Activated T-helper 1 cell treated with anti-CD3 and anti-CD28 coated beads, Interleukin-12 subunit alpha, Interleukin-12 subunit beta, Interleukin-2, Interleukin-4 antibody, amounts not matched to agents 30 ng/mL and 10 ng/mL and 1 ng/mL, durations not matched to agents 14 hours and 24 hours and 36 hours (primary cell): ENCODE measurements at regions of chr4 and their contacts with region 1.

Region 1: GRCh38 chr4:40309250-40309774 is 25.8 kb upstream of the CHRNA9 start:
- DNase-seq: peak; percentile 81
- H3K4me3 Mint-ChIP-seq: peak overlapping the region; percentile 67
- H3K27ac Mint-ChIP-seq: peak overlapping the region; percentile 94
- H3K4me1 Mint-ChIP-seq: peaks cover 88% of the 10 kb centered on the region
- H3K27me3 Mint-ChIP-seq: no peaks in the 10 kb centered on the region

Region 2: GRCh38 chr4:40149960-40150385 is 159.3 kb before region 1 on chr4:
- intact Hi-C with region 1: loop called (anchors 1 kb)
- DNase-seq: peak; percentile 67
- H3K4me3 Mint-ChIP-seq: no peak overlapping the region
- H3K27ac Mint-ChIP-seq: peak overlapping the region; percentile 48
- H3K4me1 Mint-ChIP-seq: no peaks in the 10 kb centered on the region
- H3K27me3 Mint-ChIP-seq: no peaks in the 10 kb centered on the region

Region 3: DNA sequence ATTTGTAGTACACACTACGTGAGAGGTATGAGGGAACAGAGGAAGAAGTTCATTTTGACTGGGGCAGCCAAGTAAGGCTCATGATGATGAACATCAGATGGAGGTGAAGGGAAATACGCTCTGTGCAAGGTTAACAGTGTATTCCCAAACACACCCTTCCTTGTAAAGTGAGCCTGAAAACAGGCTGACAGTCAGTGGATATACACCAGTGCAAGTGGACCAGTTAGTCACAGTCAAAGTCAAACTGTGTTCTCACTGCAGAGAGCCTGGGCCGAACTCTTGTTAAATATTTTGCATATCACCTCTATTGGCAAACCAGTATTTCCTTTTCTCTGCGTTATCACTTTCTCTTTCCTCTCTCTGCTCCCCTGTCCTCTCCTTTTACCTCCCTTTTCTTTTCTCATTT is 135.8 kb before region 1 on chr4:
- intact Hi-C with region 1: no loop called
- DNase-seq: no peak
- H3K4me3 Mint-ChIP-seq: peak overlapping the region; percentile 45
- H3K27ac Mint-ChIP-seq: peak overlapping the region; percentile 37
- H3K4me1 Mint-ChIP-seq: peaks cover 21% of the 10 kb centered on the region
- H3K27me3 Mint-ChIP-seq: peaks cover 8% of the 10 kb centered on the region

Region 4: DNA sequence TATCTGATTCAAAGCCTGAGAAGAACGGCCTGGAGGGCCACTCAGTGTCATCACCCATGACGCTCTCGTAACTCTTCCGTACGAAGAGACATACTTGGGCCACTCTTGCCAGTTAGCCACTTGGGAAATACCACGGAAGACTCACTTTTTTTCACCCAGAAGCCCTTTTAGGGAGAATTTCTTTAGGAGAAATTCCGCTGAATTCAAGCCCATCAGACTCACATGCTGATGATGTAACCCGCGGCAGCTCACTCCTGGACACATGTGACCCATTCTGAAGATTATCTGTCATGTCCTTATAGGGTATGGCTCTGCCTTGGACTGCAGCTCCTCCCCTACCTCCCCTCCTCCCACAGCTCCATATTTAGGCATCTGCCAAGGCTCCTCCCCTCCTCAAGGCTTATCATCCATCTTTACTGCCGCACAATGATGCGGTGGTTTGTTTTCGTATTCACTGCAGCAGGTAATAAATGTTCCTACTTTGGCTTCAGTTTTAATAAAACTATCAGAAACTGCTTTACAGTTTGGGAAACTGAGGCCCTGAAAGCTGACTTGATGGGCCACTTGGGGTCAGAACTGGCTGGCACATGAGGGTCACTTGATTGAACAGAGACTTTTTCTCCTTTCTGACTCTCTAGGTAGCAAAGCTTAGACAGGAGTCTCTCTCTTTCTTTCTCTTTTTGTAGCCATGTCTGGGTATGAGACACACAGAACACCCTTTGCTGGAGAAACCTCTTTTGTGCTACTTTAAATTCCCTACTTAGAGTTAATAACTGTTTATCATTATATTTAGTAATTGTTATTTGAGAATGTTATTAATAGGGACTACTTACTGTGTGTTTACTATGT is 70.4 kb before region 1 on chr4:
- intact Hi-C with region 1: loop called (anchors 1 kb)
- DNase-seq: peak; percentile 72
- H3K4me3 Mint-ChIP-seq: peak overlapping the region; percentile 83
- H3K27ac Mint-ChIP-seq: peak overlapping the region; percentile 92
- H3K4me1 Mint-ChIP-seq: peaks cover 90% of the 10 kb centered on the region
- H3K27me3 Mint-ChIP-seq: no peaks in the 10 kb centered on the region

Region 5: GRCh38 chr4:40283968-40284367 is 25.3 kb before region 1 on chr4:
- intact Hi-C with region 1: loop called (anchors 1 kb)
- DNase-seq: peak; percentile 54
- H3K4me3 Mint-ChIP-seq: peak overlapping the region; percentile 32
- H3K27ac Mint-ChIP-seq: peak overlapping the region; percentile 84
- H3K4me1 Mint-ChIP-seq: peaks cover 56% of the 10 kb centered on the region
- H3K27me3 Mint-ChIP-seq: no peaks in the 10 kb centered on the region

Region 6: DNA sequence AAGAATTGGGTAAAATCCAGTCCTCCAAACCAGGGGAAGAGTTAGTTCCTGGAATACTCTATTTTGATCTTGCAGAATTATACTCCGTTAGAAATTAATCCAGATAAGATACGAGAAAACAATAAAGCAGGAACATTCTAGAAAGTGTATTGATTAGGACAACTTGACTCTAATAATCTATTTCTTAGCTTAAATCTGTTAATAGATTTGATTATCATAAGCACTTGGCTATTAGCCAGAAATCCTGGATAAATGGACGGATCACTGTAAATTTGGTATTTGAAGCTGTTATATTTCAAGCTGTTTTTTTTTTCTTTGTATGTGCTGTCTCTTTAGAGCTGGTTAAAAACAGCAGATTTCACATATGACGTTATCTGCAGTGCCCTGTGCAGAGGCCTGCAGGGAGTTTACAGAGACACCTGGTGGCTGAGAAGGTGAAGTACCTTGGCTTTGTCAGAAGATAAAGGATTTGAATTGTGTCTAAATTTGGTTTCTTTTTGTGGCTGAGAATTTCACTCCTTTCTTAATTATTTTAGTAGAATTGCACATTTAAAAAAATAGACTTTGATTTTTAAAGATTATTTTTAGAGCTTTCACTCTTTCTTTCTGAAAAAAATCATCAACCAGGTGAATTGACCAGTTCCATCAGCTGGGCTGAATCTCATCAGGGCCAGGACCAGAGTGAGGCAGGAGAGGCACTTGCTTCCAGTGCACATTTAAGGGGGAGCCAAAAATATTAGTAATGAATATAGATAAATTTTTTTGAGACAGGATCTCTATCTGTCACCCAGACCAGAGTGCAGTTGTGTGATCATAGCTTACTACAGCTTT is 16.1 kb after region 1 on chr4:
- intact Hi-C with region 1: loop called (anchors 1 kb)
- DNase-seq: peak; percentile 54
- H3K4me3 Mint-ChIP-seq: no peak overlapping the region
- H3K27ac Mint-ChIP-seq: no peak overlapping the region
- H3K4me1 Mint-ChIP-seq: peaks cover 29% of the 10 kb centered on the region
- H3K27me3 Mint-ChIP-seq: no peaks in the 10 kb centered on the region

Region 7: DNA sequence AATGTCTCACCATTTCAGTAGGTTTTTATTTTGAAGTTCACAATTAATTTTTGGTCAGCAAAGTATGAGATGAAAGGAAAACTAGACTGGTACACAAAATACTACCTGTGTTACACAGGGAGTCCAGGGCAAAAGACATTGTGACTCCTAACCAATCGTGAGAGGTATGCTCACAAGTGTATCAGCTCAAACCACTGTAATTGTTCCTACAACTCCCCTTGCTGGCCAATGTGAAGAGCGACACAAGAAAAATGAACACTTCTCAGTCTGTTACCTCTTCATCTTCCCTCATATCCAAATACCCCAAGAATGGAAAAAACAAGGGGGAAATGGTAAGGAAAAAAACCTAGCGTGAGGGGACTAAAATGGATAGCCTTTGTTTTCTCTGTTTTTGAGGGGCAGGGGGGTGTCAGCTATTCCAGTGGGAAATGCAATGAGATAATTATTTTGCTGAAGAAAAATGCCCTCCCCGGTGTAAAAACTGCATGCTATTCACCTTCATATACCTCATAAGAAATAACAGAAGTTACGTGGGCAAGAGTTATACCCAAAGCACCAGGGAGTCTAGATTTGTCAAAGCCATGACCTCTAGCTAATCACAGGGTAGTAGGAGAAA is 409.8 kb after region 1 on chr4:
- intact Hi-C with region 1: loop called (anchors 5 kb)
- DNase-seq: no peak
- H3K4me3 Mint-ChIP-seq: no peak overlapping the region
- H3K27ac Mint-ChIP-seq: peak overlapping the region; percentile 5
- H3K4me1 Mint-ChIP-seq: peaks cover 36% of the 10 kb centered on the region
- H3K27me3 Mint-ChIP-seq: no peaks in the 10 kb centered on the region

Region 8: DNA sequence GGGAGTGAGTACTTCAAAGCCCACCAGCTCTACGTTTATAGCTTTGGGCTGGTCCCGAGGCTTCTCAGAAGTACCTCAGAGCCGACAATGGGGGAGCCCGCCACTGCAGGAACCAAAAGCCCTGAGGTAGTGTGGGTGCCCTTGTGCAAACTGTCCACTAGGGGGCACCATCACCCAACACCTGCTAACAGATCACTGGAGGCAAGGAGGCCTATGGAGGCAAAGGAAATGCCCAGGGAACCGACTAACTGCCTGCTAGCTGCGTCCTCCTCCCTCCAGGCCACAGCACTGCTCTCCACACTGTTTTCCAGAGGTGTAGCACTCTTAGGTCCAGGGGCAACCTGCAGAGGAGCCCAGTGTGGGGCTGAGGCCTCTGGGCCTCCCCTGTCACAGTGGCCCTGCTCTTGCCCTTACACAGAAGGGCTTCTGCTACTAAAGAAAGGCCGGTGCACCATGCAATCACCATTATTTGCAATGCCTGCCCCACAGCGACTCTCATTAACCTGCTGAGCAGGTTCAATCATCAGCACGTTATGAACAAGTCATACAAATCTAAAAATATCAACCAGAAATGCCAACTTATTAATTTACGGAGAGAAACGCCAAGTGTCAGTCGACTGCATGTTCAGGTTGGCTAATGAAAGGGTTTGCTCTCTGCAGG is 599.5 kb after region 1 on chr4:
- intact Hi-C with region 1: loop called (anchors 5 kb)
- DNase-seq: peak; percentile 61
- H3K4me3 Mint-ChIP-seq: peak overlapping the region; percentile 43
- H3K27ac Mint-ChIP-seq: peak overlapping the region; percentile 91
- H3K4me1 Mint-ChIP-seq: peaks cover 34% of the 10 kb centered on the region
- H3K27me3 Mint-ChIP-seq: no peaks in the 10 kb centered on the region